Activated CD8-positive, alpha-beta T cell treated with anti-CD3 and anti-CD28 coated beads, Interleukin-2, amount 10 ng/mL, durations not matched to agents 7 days and 5 days (primary cell): ENCODE measurements at regions of chr2 and their contacts with region 1.

Region 1: GRCh38 chr2:70258532-70258874 is 566 bp downstream of the PCYOX1 start:
- DNase-seq: peak; percentile 26
- ATAC-seq: no peak
- H3K4me3 Mint-ChIP-seq: peak overlapping the region; percentile 79
- H3K27ac Mint-ChIP-seq: no peak overlapping the region
- H3K4me1 Mint-ChIP-seq: peaks cover 36% of the 10 kb centered on the region
- H3K27me3 Mint-ChIP-seq: no peaks in the 10 kb centered on the region

Region 2: GRCh38 chr2:69946351-69947077 is 312.0 kb before region 1 on chr2:
- CTCF ChIA-PET with region 1: no interaction called
- POLR2A ChIA-PET with region 1: no interaction called
- DNase-seq: peak; percentile 82
- ATAC-seq: peak; percentile 89
- H3K4me3 Mint-ChIP-seq: peak overlapping the region; percentile 9
- H3K27ac Mint-ChIP-seq: peak overlapping the region; percentile 87
- H3K4me1 Mint-ChIP-seq: peaks cover 30% of the 10 kb centered on the region
- H3K27me3 Mint-ChIP-seq: peaks cover 2% of the 10 kb centered on the region

Region 3: GRCh38 chr2:70181363-70181956 is 77.0 kb before region 1 on chr2:
- CTCF ChIA-PET with region 1: no interaction called
- POLR2A ChIA-PET with region 1: no interaction called
- DNase-seq: no peak
- ATAC-seq: no peak
- H3K4me3 Mint-ChIP-seq: no peak overlapping the region
- H3K27ac Mint-ChIP-seq: peak overlapping the region; percentile 15
- H3K4me1 Mint-ChIP-seq: peaks cover 12% of the 10 kb centered on the region
- H3K27me3 Mint-ChIP-seq: no peaks in the 10 kb centered on the region

Region 4: DNA sequence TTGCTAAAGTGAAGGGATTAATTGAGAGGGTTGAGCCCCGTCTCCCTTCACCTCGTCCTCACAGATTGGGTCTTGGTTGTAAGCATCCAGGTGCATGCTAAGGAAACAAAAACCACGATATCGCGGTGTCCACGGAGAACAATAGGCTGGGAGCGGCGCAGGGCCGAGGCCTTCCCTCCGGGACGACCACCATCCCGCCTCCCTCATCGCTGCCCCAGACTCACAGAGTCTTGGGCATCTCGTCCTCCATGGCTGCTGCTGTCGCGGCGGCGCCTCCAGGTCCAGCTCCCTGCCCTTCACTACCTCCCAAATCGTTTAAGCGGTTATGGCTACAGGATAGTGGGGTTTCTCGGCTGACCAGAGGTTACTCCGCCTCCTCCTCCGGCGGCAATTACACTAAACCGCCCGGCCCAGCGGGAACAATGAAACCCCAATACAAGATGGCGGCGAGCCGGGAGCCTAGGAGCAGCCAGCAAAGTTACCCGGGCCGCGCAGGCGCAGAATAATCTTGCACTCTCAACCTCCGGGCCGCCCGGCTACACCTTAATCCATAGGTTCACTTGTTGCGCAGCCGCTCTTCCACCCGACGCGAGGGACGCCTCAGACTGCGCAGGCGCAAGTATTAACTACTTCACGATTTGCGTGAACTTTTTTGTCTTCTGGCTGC is 10.2 kb before region 1 on chr2 and contains the start of gene TIA1:
- CTCF ChIA-PET with region 1: interaction called, 7 read pairs
- POLR2A ChIA-PET with region 1: interaction called, 30 read pairs
- DNase-seq: peak; percentile 99
- ATAC-seq: peak; percentile 99
- H3K4me3 Mint-ChIP-seq: peak within 1 kb of the TSS; percentile 99
- H3K27ac Mint-ChIP-seq: peak within 1 kb of the TSS; percentile 98
- H3K4me1 Mint-ChIP-seq: peaks cover 36% of the 10 kb centered on the region
- H3K27me3 Mint-ChIP-seq: no peaks in the 10 kb centered on the region
- total RNA-seq, gene TIA1: 119 to 125 TPM